Common myeloid progenitor, CD34-positive (primary cell): ENCODE measurements at regions of chr1 and their contacts with region 1.

Region 1: DNA sequence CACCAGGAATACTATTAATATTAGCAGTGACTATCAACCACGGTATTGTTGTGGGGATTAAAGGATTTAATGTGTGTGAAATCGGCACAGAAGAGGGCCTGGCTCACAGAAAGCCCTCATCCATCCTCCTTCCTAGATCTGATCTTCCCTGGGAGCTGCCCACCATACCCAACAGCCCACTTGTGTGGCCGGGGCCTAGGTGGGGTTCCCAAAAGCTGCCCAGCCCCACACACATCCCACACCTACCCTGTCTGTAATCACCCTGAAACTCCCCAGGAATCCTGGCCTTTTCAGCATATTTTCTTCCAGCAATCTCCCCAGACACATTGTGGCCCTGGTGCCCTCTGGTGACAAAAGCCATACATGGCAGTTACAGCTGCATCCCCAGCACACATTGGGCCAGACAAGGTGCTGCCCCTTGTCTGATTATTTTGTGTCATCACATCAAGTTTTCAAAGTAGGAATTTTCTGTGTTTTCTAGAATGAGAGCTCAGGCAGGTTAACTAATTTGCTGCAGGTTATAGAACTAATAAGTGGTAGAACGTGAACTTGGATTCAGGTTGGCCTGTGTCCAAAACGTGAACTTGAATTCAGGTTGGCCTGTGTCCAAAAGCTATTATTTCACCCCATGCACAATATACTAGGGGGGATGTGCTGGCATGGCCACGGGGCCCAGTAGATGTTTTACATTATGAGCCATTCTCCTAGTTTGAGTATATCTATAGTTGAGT is 5.3 kb upstream of the SLC6A9 start:
- DNase-seq: peak; percentile 68 to 86 (median 86)
- H3K4me3 ChIP-seq: no peak overlapping the region
- H3K27ac ChIP-seq: peak overlapping the region in 1 of 2 experiments; percentile 11
- H3K4me1 ChIP-seq: peaks cover 0 to 41% (median 2%) of the 10 kb centered on the region in 4 experiments
- H3K27me3 ChIP-seq: peaks cover 0 to 2% (median 0%) of the 10 kb centered on the region in 5 experiments

Region 2: DNA sequence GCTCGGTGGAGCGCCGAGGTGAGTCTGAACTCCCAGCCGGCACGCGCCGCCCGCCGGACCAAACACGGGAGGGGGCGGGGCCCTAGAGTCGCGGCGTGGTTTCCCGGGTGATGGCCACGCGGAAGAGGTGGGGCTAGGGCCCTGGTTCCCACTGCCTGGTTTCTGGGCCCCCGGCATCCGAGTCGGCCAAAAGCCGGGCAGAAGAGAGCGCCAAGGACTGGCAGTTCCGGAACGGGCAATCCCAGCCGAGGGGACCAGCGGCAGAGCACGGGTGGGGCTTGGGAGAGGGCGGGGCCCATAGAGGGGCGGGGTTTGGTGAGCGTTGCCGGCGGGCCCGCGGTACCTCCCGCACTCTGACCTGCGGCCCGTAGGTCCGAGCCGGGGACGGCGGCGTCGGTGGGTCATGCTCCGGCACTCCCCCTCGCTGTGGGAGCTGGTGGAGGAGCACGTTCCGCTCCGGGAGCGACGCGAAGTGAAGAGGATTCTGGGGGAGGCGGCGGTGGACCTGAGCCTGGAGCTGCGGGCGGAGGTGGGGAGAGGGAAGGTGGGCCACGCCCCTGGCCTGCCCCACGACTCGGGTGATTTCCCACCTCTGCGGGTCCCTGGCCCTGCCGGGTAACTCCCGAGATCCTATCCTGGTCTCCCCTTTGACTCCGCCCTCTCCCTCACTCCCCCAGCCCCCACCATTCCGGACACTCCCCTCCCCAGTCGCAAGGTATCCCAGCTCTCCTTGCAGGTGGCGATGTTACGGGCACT is 44.9 kb before region 1 on chr1 and contains the start of gene CCDC24:
- CTCF ChIA-PET with region 1: interaction called, 19 read pairs
- POLR2A ChIA-PET with region 1: no interaction called
- DNase-seq: peak; percentile 28 to 66 (median 51)
- H3K4me3 ChIP-seq: peak within 1 kb of the TSS; percentile 49 to 87 (median 72)
- H3K27ac ChIP-seq: peak within 1 kb of the TSS in 1 of 2 experiments; percentile 49
- H3K4me1 ChIP-seq: peaks cover 0 to 28% (median 28%) of the 10 kb centered on the region in 4 experiments
- H3K27me3 ChIP-seq: no peaks in the 10 kb centered on the region

Region 3: GRCh38 chr1:44002606-44003157 is 33.9 kb before region 1 on chr1:
- CTCF ChIA-PET with region 1: interaction called, 93 read pairs
- POLR2A ChIA-PET with region 1: no interaction called
- DNase-seq: no peak
- H3K4me3 ChIP-seq: no peak overlapping the region
- H3K27ac ChIP-seq: no peak overlapping the region
- H3K4me1 ChIP-seq: no peaks in the 10 kb centered on the region
- H3K27me3 ChIP-seq: no peaks in the 10 kb centered on the region

Region 4: GRCh38 chr1:44012941-44013609 is 23.5 kb before region 1 on chr1:
- CTCF ChIA-PET with region 1: interaction called, 41 read pairs
- POLR2A ChIA-PET with region 1: no interaction called
- DNase-seq: peak in 2 of 3 donors; percentile 72 to 78
- H3K4me3 ChIP-seq: no peak overlapping the region
- H3K27ac ChIP-seq: no peak overlapping the region
- H3K4me1 ChIP-seq: peaks cover 0 to 32% (median 24%) of the 10 kb centered on the region in 4 experiments
- H3K27me3 ChIP-seq: no peaks in the 10 kb centered on the region

Region 5: GRCh38 chr1:44021581-44022321 is 14.8 kb before region 1 on chr1:
- CTCF ChIA-PET with region 1: interaction called, 38 read pairs
- POLR2A ChIA-PET with region 1: no interaction called
- DNase-seq: no peak
- H3K4me3 ChIP-seq: no peak overlapping the region
- H3K27ac ChIP-seq: no peak overlapping the region
- H3K4me1 ChIP-seq: no peaks in the 10 kb centered on the region
- H3K27me3 ChIP-seq: no peaks in the 10 kb centered on the region

Region 6: DNA sequence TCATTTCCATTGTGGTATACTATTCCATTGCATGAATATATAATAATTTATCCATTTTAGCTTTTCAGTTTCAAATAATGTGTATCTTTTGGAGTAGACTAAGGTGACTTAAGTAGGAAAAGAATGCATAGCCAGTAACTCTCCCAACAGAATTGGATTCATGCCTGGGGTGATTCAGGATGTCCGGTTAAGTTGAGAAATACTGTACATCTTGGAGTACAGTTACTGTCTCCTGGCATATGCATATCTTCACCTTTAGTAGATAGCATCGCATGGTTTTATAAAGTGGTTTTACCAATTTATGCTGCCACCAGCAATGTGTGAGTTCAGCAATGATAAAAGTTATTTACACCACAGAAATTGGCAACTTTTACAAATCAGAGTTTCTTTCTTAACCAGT is 13.3 kb after region 1 on chr1:
- CTCF ChIA-PET with region 1: interaction called, 86 read pairs
- POLR2A ChIA-PET with region 1: interaction called, 3 read pairs
- DNase-seq: no peak
- H3K4me3 ChIP-seq: no peak overlapping the region
- H3K27ac ChIP-seq: no peak overlapping the region
- H3K4me1 ChIP-seq: peaks cover 5 to 29% (median 20%) of the 10 kb centered on the region in 4 experiments
- H3K27me3 ChIP-seq: no peaks in the 10 kb centered on the region